ENCODE measurements at regions of chrX and their contacts with region 1.

Region 1: GRCh38 chrX:112512509-112512908 is 167.2 kb downstream of the LHFPL1 start:
- DNase-seq: peak; percentile 5 to 25
- H3K4me3 ChIP-seq: no peak overlapping the region
- H3K4me3 Mint-ChIP-seq: no peak overlapping the region
- H3K27ac Mint-ChIP-seq: no peak overlapping the region
- H3K4me1 ChIP-seq: no peaks in the 10 kb centered on the region
- H3K4me1 Mint-ChIP-seq: no peaks in the 10 kb centered on the region
- H3K27me3 ChIP-seq: no peaks in the 10 kb centered on the region
- H3K27me3 Mint-ChIP-seq: no peaks in the 10 kb centered on the region
- CTCF ChIP-seq: no peak

Region 2: GRCh38 chrX:112120721-112121120 is 391.8 kb before region 1 on chrX:
- CTCF ChIA-PET with region 1: interaction called, 10 read pairs
- POLR2A ChIA-PET with region 1: no interaction called
- intact Hi-C with region 1: no loop called
- DNase-seq: no peak
- H3K4me3 ChIP-seq: no peak overlapping the region
- H3K4me3 Mint-ChIP-seq: no peak overlapping the region
- H3K27ac Mint-ChIP-seq: no peak overlapping the region
- H3K4me1 ChIP-seq: no peaks in the 10 kb centered on the region
- H3K4me1 Mint-ChIP-seq: no peaks in the 10 kb centered on the region
- H3K27me3 ChIP-seq: no peaks in the 10 kb centered on the region
- H3K27me3 Mint-ChIP-seq: no peaks in the 10 kb centered on the region
- CTCF ChIP-seq: no peak